CD4-positive, alpha-beta T cell (primary cell): ENCODE measurements at regions of chr13 and their contacts with region 1.

Region 1: DNA sequence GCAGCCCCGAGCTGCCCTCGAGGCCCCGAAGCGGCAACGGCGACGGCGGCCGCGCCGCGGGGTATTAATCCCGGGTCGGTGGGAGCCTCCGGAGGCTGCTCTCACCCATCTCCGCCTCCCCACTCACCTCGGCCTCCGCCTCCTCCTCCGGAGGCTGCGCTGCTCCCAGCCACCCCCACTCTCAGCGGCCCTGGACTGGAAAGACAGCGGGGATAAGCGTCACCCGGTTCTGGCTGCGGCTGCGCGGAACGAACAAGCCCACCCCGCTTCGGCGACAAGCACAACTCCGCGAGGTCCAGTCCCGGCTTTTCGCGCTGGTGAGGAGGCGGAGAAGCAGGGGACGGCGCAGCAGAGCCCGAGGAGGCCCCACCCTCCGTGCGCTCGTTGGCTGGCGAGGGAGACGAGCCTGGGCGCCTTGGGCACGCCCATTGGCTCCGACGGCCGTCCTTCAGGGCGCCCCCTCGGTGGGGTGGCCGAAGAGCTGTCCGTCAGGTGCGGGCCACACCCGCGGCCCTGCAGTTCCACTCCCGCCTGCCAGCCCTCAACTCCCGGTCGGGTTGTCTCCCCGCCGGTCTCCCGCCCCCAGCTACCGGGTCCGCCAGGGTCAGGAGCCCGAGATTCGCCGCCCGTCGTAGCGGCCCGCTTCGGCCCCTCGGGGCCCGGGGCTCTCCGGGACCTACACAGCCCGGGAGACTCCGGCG is at the start of gene ZMYM5:
- DNase-seq: peak; percentile 85 to 98 (median 93)
- ATAC-seq: peak; percentile 81
- H3K4me3 ChIP-seq: peak within 1 kb of the TSS; percentile 84
- H3K4me3 Mint-ChIP-seq: peak within 1 kb of the TSS; percentile 98
- H3K27ac ChIP-seq: peak within 1 kb of the TSS; percentile 92
- H3K27ac Mint-ChIP-seq: peak within 1 kb of the TSS; percentile 91
- H3K4me1 ChIP-seq: peaks cover 33% of the 10 kb centered on the region
- H3K4me1 Mint-ChIP-seq: peaks cover 37% of the 10 kb centered on the region
- H3K27me3 ChIP-seq: no peaks in the 10 kb centered on the region
- H3K27me3 Mint-ChIP-seq: no peaks in the 10 kb centered on the region
- CTCF ChIP-seq: no peak
- total RNA-seq, gene ZMYM5: 29.2 to 32.1 TPM

Region 2: GRCh38 chr13:19633479-19634255 is 229.8 kb before region 1 on chr13 and contains the start of gene MPHOSPH8:
- CTCF ChIA-PET with region 1: interaction called, 3 read pairs
- POLR2A ChIA-PET with region 1: interaction called, 17 read pairs
- intact Hi-C with region 1: loop called (anchors 2 to 5 kb)
- DNase-seq: peak; percentile 86 to 98 (median 92)
- ATAC-seq: peak; percentile 96
- H3K4me3 ChIP-seq: peak within 1 kb of the TSS; percentile 84
- H3K4me3 Mint-ChIP-seq: peak within 1 kb of the TSS; percentile 100
- H3K27ac ChIP-seq: peak within 1 kb of the TSS; percentile 76 to 79
- H3K27ac Mint-ChIP-seq: peak within 1 kb of the TSS; percentile 97
- H3K4me1 ChIP-seq: peaks cover 29% of the 10 kb centered on the region
- H3K4me1 Mint-ChIP-seq: peaks cover 38% of the 10 kb centered on the region
- H3K27me3 ChIP-seq: no peaks in the 10 kb centered on the region
- H3K27me3 Mint-ChIP-seq: no peaks in the 10 kb centered on the region
- CTCF ChIP-seq: no peak
- total RNA-seq, gene MPHOSPH8: 48.0 to 51.2 TPM

Region 3: GRCh38 chr13:19759671-19760070 is 103.8 kb before region 1 on chr13:
- CTCF ChIA-PET with region 1: no interaction called
- POLR2A ChIA-PET with region 1: interaction called, 4 read pairs
- intact Hi-C with region 1: loop called in 1 of 2 experiments (anchors 5 kb)
- DNase-seq: no peak
- ATAC-seq: no peak
- H3K4me3 ChIP-seq: no peak overlapping the region
- H3K4me3 Mint-ChIP-seq: no peak overlapping the region
- H3K27ac ChIP-seq: no peak overlapping the region
- H3K27ac Mint-ChIP-seq: no peak overlapping the region
- H3K4me1 ChIP-seq: peaks cover 23% of the 10 kb centered on the region
- H3K4me1 Mint-ChIP-seq: peaks cover 49% of the 10 kb centered on the region
- H3K27me3 ChIP-seq: no peaks in the 10 kb centered on the region
- H3K27me3 Mint-ChIP-seq: no peaks in the 10 kb centered on the region
- CTCF ChIP-seq: no peak

Region 4: GRCh38 chr13:19782049-19782726 is 81.3 kb before region 1 on chr13:
- CTCF ChIA-PET with region 1: no interaction called
- POLR2A ChIA-PET with region 1: interaction called, 74 read pairs
- intact Hi-C with region 1: loop called (anchors 2 kb)
- DNase-seq: peak in 13 of 14 experiments; percentile 30 to 74 (median 46)
- ATAC-seq: peak; percentile 49
- H3K4me3 ChIP-seq: peak overlapping the region; percentile 100
- H3K4me3 Mint-ChIP-seq: peak overlapping the region; percentile 91
- H3K27ac ChIP-seq: peak overlapping the region; percentile 85 to 96
- H3K27ac Mint-ChIP-seq: peak overlapping the region; percentile 95
- H3K4me1 ChIP-seq: peaks cover 16% of the 10 kb centered on the region
- H3K4me1 Mint-ChIP-seq: peaks cover 11% of the 10 kb centered on the region
- H3K27me3 ChIP-seq: no peaks in the 10 kb centered on the region
- H3K27me3 Mint-ChIP-seq: no peaks in the 10 kb centered on the region
- CTCF ChIP-seq: no peak

Region 5: GRCh38 chr13:19845758-19846157 is 17.7 kb before region 1 on chr13:
- CTCF ChIA-PET with region 1: interaction called, 5 read pairs
- POLR2A ChIA-PET with region 1: interaction called, 12 read pairs
- intact Hi-C with region 1: loop called in 1 of 2 experiments (anchors 2 kb)
- DNase-seq: peak in 2 of 14 experiments; percentile 50
- ATAC-seq: no peak
- H3K4me3 ChIP-seq: no peak overlapping the region
- H3K4me3 Mint-ChIP-seq: no peak overlapping the region
- H3K27ac ChIP-seq: no peak overlapping the region
- H3K27ac Mint-ChIP-seq: no peak overlapping the region
- H3K4me1 ChIP-seq: peaks cover 10% of the 10 kb centered on the region
- H3K4me1 Mint-ChIP-seq: peaks cover 20% of the 10 kb centered on the region
- H3K27me3 ChIP-seq: no peaks in the 10 kb centered on the region
- H3K27me3 Mint-ChIP-seq: no peaks in the 10 kb centered on the region
- CTCF ChIP-seq: no peak

Region 6: DNA sequence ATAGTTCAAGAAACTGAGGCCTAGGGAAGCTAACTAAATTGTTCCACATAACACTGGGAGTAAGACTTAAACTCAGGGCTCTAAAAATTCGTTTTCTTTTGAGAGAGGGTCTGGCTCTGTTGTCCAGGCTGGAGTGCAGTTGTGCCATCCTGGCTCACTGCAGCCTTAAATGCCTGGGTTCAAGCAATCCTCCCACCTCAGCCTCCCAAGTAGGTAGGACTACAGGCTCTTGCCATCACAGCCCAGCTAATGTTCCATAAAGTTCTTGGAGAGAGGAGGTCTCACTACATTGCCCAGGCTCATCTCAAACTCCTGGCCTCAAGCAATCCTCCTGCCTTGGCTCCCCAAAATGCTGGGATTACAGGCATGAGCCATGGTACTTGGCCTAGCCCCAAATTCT is 10.7 kb before region 1 on chr13:
- CTCF ChIA-PET with region 1: interaction called, 5 read pairs
- POLR2A ChIA-PET with region 1: interaction called, 11 read pairs
- intact Hi-C with region 1: no loop called
- DNase-seq: no peak
- ATAC-seq: no peak
- H3K4me3 ChIP-seq: no peak overlapping the region
- H3K4me3 Mint-ChIP-seq: no peak overlapping the region
- H3K27ac ChIP-seq: no peak overlapping the region
- H3K27ac Mint-ChIP-seq: no peak overlapping the region
- H3K4me1 ChIP-seq: peaks cover 26% of the 10 kb centered on the region
- H3K4me1 Mint-ChIP-seq: peaks cover 31% of the 10 kb centered on the region
- H3K27me3 ChIP-seq: no peaks in the 10 kb centered on the region
- H3K27me3 Mint-ChIP-seq: no peaks in the 10 kb centered on the region
- CTCF ChIP-seq: no peak